GM13976 (cell line): ENCODE measurements at regions of chr17 and their contacts with region 1.

Region 1: GRCh38 chr17:16363749-16364536 is 10.7 kb upstream of the CENPV start:
- DNase-seq: peak; percentile 79
- CTCF ChIP-seq: peak; percentile 94

Region 2: DNA sequence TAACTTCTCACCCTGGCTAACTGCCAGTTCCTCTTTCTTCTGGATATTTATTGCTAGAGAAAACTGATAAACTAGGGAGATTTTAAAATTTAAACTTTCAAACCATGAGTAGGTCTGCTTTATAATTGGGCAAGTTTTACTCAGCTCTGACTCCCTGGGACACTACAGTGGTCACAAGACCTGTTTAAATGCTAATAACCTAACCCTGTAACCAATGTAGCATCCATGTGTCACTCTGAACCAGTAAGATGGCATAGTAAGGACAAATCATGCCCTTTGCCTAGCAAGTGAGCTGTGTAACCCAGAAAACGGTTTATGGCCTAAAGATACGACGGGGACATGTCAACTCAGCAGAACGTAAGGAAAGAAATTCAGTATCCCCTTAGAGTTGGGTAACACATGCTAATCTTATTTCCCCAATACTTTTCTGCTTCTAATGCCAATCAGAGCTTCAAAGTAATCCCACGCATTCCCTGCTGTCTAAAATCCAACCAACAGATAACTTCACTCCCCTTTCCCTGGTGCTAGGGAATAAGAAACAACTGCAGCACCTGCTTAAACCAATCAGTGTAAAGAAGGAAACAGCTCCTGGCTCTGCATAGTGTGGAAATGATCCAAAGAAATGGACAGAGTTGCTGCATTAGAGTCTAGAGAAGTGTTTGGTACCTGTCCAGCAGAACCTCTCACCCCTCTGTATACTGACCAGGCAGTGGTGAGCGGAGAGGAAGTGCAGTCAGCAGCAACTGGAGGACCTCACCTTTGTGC is 234.3 kb before region 1 on chr17:
- in situ Hi-C with region 1: no loop called
- DNase-seq: no peak
- CTCF ChIP-seq: no peak

Region 3: GRCh38 chr17:16150251-16150856 is 213.6 kb before region 1 on chr17:
- in situ Hi-C with region 1: no loop called
- DNase-seq: no peak
- CTCF ChIP-seq: no peak

Region 4: GRCh38 chr17:16269658-16270057 is 94.3 kb before region 1 on chr17:
- in situ Hi-C with region 1: no loop called
- DNase-seq: no peak
- CTCF ChIP-seq: no peak

Region 5: GRCh38 chr17:16521070-16521727 is 157.3 kb after region 1 on chr17:
- in situ Hi-C with region 1: loop called (anchors 10 kb)
- DNase-seq: peak; percentile 84
- CTCF ChIP-seq: peak; percentile 81